ENCODE measurements at regions of chr11 and their contacts with region 1.

Region 1: GRCh38 chr11:69700278-69701140 is 3.3 kb downstream of the FGF19 start:
- DNase-seq: no peak
- H3K4me3 ChIP-seq: no peak overlapping the region
- H3K27ac ChIP-seq: no peak overlapping the region
- H3K4me1 ChIP-seq: peaks cover 10% of the 10 kb centered on the region
- H3K27me3 ChIP-seq: peaks cover 43% of the 10 kb centered on the region
- CTCF ChIP-seq: no peak

Region 2: GRCh38 chr11:69497221-69497787 is 203.2 kb before region 1 on chr11:
- intact Hi-C with region 1: no loop called
- DNase-seq: no peak
- H3K4me3 ChIP-seq: no peak overlapping the region
- H3K27ac ChIP-seq: no peak overlapping the region
- H3K4me1 ChIP-seq: no peaks in the 10 kb centered on the region
- H3K27me3 ChIP-seq: no peaks in the 10 kb centered on the region
- CTCF ChIP-seq: no peak

Region 3: DNA sequence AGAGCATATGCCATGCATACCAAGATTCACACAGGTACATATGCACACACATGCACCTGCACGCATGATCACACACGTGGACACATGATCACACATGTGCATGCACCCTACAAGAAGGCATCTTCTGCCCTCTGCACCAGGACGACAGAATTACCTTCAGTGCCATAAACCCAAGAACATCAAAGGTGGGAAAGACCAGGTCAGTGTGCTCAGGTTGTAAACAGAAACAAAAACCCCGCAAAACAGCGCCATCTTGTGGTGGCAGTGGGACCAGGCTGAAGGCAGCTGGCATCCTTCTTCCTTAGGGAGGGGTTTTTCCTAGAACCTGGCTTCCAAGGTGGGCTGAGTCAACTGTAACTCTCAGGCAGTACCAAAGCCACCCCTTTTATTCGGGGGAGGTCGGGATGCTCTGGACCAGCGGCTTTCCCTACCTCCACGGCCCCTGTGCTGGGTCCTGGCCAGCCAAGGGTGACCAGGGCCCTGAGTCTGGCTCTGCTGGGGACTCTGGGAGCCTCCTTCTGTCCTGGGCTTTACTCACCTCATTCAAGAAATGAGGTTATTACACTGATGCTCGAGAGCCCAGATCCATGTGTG is 188.1 kb after region 1 on chr11:
- intact Hi-C with region 1: loop called (anchors 5 kb)
- DNase-seq: peak; percentile 83
- H3K4me3 ChIP-seq: no peak overlapping the region
- H3K27ac ChIP-seq: no peak overlapping the region
- H3K4me1 ChIP-seq: peaks cover 11% of the 10 kb centered on the region
- H3K27me3 ChIP-seq: no peaks in the 10 kb centered on the region
- CTCF ChIP-seq: peak; percentile 94